Endothelial cell of umbilical vein (primary cell): ENCODE measurements at regions of chr12 and their contacts with region 1.

Region 1: DNA sequence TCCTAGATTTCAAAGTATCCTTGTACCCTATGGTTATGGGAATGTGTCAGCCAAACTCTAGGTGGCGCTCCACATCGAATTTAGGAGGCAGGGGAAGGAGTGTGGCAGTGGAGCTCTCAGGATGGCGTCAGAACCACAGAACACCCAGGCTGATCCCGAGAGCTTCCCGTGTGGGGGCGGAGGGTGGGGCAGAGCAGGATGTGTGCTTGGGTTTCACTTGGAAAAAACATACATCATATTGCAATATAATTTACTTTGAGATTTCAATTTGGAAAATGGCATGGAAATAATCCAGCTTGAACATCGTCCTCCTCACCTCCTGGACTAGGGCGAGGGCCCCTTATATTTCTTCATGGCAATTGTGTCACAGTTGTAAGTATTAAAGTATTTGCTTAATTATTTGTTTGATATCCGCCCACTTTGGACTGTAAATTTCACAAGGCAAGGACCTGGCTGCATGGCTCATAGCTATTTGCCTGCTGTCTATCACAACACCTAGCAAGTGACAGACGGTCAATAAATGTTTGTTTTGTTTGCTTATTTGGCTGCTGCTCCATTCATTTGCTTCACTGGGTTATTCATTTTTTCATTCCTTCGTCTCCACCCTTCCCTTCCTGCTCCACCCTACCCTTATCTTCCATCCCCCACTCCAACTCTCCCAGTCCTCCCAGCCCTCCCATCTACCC is 221.5 kb upstream of the HMGA2 start:
- DNase-seq: peak; percentile 91
- H3K4me3 ChIP-seq: peak overlapping the region; percentile 18 to 77 (median 24)
- H3K27ac ChIP-seq: peak overlapping the region; percentile 95
- H3K4me1 ChIP-seq: peaks cover 50% of the 10 kb centered on the region
- H3K27me3 ChIP-seq: no peaks in the 10 kb centered on the region
- CTCF ChIP-seq: peak; percentile 58 to 78
- POLR2A ChIP-seq: peak; percentile 57

Region 2: DNA sequence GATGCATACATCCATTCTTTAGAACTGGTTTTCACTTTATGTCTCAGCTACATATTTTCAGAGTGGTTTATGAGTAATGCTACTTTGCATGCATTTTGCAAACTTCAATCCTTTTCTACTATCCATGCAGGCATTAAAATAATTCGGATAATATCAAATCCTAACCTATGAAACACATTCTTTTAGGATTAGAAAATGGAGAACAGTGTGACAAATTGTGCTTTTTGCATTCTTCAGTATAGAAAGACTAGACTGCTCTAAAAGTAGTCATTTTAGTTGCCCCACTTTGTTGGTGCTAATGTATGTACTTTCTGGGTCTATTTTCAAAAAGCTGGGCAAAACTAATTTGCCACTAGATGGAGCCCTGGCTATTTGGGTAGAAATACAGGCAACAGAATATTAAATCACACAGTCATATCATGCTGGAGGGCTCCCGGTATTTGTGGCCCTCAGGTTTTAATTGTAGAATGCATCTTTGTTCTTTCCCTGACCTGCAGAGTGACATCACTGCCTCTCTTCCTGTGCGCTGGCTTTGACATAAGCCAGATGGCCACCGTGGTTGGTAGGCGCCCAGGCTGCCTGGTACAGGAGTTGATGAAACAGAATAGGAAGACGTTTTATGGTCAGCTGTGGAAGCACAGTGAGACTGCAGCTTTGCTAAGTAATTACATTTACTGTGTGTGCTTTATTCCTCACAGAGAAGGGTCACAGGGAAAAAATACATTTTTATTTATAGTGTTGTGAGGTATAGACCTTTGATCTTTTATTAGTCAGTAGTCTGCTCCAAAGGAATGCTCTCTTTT is 296.2 kb before region 1 on chr12:
- CTCF ChIA-PET with region 1: interaction called, 13 read pairs
- POLR2A ChIA-PET with region 1: interaction called, 3 read pairs
- dilution Hi-C with region 1: no loop called
- intact Hi-C with region 1: loop called (anchors 1 kb)
- DNase-seq: peak; percentile 83
- H3K4me3 ChIP-seq: peak overlapping the region in 1 of 3 experiments; percentile 44
- H3K27ac ChIP-seq: peak overlapping the region; percentile 96
- H3K4me1 ChIP-seq: peaks cover 46% of the 10 kb centered on the region
- H3K27me3 ChIP-seq: no peaks in the 10 kb centered on the region
- CTCF ChIP-seq: peak; percentile 51 to 53
- POLR2A ChIP-seq: no peak

Region 3: GRCh38 chr12:65335021-65335714 is 267.6 kb before region 1 on chr12:
- CTCF ChIA-PET with region 1: no interaction called
- POLR2A ChIA-PET with region 1: no interaction called
- dilution Hi-C with region 1: no loop called
- intact Hi-C with region 1: no loop called
- DNase-seq: peak; percentile 40
- H3K4me3 ChIP-seq: no peak overlapping the region
- H3K27ac ChIP-seq: no peak overlapping the region
- H3K4me1 ChIP-seq: peaks cover 6% of the 10 kb centered on the region
- H3K27me3 ChIP-seq: no peaks in the 10 kb centered on the region
- CTCF ChIP-seq: no peak
- POLR2A ChIP-seq: no peak

Region 4: GRCh38 chr12:65556681-65557437 is 45.9 kb before region 1 on chr12:
- CTCF ChIA-PET with region 1: interaction called, 60 read pairs
- POLR2A ChIA-PET with region 1: no interaction called
- dilution Hi-C with region 1: no loop called
- intact Hi-C with region 1: loop called (anchors 1 kb)
- DNase-seq: peak; percentile 88
- H3K4me3 ChIP-seq: no peak overlapping the region
- H3K27ac ChIP-seq: peak overlapping the region; percentile 47
- H3K4me1 ChIP-seq: peaks cover 17% of the 10 kb centered on the region
- H3K27me3 ChIP-seq: no peaks in the 10 kb centered on the region
- CTCF ChIP-seq: peak; percentile 88 to 96
- POLR2A ChIP-seq: no peak

Region 5: GRCh38 chr12:65631621-65632111 is 28.9 kb after region 1 on chr12:
- CTCF ChIA-PET with region 1: interaction called, 19 read pairs
- POLR2A ChIA-PET with region 1: interaction called, 3 read pairs
- dilution Hi-C with region 1: no loop called
- intact Hi-C with region 1: loop called (anchors 1 kb)
- DNase-seq: peak; percentile 94
- H3K4me3 ChIP-seq: no peak overlapping the region
- H3K27ac ChIP-seq: peak overlapping the region; percentile 87
- H3K4me1 ChIP-seq: peaks cover 56% of the 10 kb centered on the region
- H3K27me3 ChIP-seq: no peaks in the 10 kb centered on the region
- CTCF ChIP-seq: no peak
- POLR2A ChIP-seq: peak; percentile 49

Region 6: GRCh38 chr12:65685514-65685913 is 82.8 kb after region 1 on chr12:
- CTCF ChIA-PET with region 1: interaction called, 8 read pairs
- POLR2A ChIA-PET with region 1: no interaction called
- dilution Hi-C with region 1: no loop called
- intact Hi-C with region 1: loop called (anchors 1 kb)
- DNase-seq: peak; percentile 63
- H3K4me3 ChIP-seq: no peak overlapping the region
- H3K27ac ChIP-seq: no peak overlapping the region
- H3K4me1 ChIP-seq: no peaks in the 10 kb centered on the region
- H3K27me3 ChIP-seq: no peaks in the 10 kb centered on the region
- CTCF ChIP-seq: peak; percentile 52 to 63
- POLR2A ChIP-seq: no peak

Region 7: DNA sequence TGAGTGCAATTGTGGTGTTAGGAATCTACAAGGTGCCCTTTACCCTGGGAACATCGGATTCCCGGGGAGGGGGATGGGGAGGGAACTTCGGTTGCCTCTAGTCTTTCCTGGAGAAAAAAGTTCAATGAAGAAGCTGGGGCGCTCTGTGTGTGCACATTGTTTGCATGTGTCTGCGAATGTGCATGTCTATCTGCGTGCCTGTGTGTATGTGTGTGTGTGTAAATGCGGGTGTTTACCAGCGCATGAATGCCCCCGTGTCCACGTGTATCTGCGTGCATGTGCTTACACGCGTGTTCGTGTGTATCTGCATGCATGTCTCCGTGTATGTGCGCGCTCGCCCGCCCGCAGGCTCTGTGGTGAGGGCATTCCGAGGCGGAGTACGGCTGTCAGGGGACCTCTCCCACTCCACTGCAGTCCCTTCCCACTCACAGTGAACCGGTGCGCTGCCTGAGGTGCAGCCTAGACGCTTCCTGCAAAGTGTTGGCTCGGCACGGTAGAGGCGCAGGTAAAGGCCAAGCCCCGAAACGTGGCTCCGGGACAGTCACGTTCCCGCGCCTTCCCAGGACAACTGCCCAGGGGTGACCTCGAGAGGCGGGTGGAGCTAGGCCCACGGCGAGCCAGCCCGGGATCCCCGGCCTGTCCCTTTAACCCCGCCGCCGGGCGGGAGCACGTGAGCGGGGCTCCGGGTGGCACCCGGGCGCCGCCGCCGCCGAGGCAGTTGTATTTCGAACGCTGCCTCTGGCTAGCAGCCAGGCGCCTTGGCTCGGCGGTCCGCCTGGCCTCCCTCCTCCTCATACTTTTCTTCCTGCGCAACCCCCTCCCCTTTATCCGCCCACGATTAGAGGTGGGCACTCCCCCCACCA is 221.0 kb after region 1 on chr12:
- CTCF ChIA-PET with region 1: interaction called, 16 read pairs
- POLR2A ChIA-PET with region 1: no interaction called
- dilution Hi-C with region 1: no loop called
- intact Hi-C with region 1: loop called (anchors 1 kb)
- DNase-seq: peak; percentile 60
- H3K4me3 ChIP-seq: peak overlapping the region; percentile 58 to 97 (median 71)
- H3K27ac ChIP-seq: peak overlapping the region; percentile 71
- H3K4me1 ChIP-seq: peaks cover 31% of the 10 kb centered on the region
- H3K27me3 ChIP-seq: no peaks in the 10 kb centered on the region
- CTCF ChIP-seq: no peak
- POLR2A ChIP-seq: no peak

Region 8: DNA sequence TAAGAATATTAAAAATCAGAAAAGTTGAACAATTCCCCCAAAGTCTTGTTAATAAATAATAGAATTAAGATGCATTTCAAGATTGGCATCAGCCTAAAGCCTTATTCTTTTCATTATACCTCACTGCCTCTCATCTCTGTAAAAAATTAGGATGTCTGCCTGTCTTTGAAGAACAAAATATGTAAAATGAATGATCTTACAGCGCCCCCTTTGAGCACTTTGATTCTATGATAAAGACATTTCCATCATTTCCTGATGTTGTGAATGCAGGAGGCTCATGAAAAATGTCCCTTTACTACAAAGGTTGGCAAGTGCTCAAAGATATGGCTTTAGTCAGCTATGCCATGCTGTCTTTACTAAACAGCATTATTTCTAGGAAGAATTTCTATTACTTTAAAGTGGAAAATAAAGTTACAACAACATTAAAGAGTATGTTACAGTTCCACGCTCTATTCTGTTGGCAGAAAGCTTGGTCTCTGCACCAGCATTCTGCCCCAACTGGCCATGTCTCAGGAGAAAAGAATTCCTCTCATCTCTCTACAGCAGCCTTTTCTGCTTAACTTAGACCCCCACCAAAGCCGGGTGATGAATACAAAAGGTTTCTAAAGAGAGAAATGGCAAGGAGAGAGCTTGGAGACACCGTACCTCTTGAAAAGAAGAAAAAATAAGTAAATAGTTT is 432.7 kb after region 1 on chr12:
- CTCF ChIA-PET with region 1: interaction called, 10 read pairs
- POLR2A ChIA-PET with region 1: no interaction called
- dilution Hi-C with region 1: no loop called
- intact Hi-C with region 1: loop called (anchors 1 kb)
- DNase-seq: peak; percentile 71
- H3K4me3 ChIP-seq: no peak overlapping the region
- H3K27ac ChIP-seq: no peak overlapping the region
- H3K4me1 ChIP-seq: peaks cover 10% of the 10 kb centered on the region
- H3K27me3 ChIP-seq: peaks cover 1 to 3% of the 10 kb centered on the region in 2 experiments
- CTCF ChIP-seq: peak; percentile 26 to 35
- POLR2A ChIP-seq: no peak

Region 9: DNA sequence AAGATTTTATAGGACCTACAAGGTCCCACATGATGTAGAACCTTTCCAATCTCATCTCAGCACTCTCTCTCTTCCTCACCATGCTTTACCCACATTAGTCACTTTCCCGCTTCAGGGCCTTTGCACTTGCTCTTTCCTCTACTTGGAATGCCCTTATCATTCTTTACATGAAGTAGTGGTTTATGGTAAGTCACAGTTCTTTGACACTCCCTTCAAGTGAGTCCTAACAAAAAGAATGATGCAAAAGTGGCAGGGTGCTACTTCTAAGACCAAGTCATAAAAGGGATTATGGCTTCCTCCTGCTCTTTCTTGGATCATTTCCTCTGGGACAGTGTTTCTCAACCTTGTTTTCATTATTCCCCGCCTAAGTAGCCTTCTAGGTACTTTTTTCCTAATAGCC is 553.9 kb after region 1 on chr12:
- CTCF ChIA-PET with region 1: no interaction called
- POLR2A ChIA-PET with region 1: no interaction called
- dilution Hi-C with region 1: no loop called
- intact Hi-C with region 1: no loop called
- DNase-seq: no peak
- H3K4me3 ChIP-seq: no peak overlapping the region
- H3K27ac ChIP-seq: no peak overlapping the region
- H3K4me1 ChIP-seq: peaks cover 7% of the 10 kb centered on the region
- H3K27me3 ChIP-seq: no peaks in the 10 kb centered on the region
- CTCF ChIP-seq: no peak
- POLR2A ChIP-seq: no peak